CD4-positive, alpha-beta memory T cell (primary cell): ENCODE measurements at regions of chr19 and their contacts with region 1.

Region 1: DNA sequence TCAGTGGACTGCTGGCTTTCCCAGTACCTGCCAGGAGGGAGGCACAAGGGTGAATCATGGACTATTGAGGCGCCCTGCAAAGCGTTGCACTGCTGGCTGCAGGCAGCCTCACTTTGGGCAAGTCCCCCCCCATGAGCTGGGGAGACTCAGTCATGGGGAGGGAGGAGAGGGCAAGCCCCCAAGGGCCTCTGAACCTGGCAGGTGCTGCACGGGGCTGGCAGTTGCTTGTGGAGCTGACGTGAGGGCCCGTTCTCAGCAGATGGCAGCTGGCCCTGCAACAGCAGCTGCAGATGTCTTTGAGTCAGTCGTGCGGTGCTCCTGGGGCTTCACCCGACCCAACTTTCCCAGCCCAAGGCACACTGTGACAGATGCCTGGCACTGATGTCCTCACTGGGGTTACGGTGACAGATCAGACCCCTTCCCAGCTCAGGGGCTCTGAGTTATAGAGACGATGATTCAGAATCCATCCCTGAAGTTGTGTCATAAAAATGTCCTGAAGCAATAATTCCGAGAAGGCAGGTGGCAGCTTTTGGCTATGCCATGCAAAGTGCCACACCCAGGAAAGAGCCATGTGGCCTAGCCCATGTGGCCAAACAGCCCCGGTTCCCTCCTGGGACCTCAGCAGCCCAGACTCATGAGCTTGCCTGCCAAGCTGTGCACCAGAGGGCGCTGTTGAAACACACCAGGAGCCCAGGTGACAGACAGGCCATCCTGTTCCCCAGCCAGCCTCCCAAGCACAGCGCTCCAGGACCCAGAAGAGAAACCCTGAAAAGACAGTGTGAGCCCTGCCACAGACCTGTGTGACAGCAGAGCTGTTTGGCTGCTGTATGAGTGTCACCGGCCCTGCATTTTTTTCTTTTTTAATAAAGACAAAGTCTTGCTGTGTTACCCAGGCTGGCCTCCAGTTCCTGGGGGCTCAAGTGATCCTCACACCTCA is 53.6 kb upstream of the LDLR start:
- DNase-seq: peak; percentile 78 to 84 (median 81)
- H3K4me3 ChIP-seq: no peak overlapping the region
- H3K4me3 Mint-ChIP-seq: peak overlapping the region in 1 of 8 donors; percentile 18
- H3K27ac ChIP-seq: no peak overlapping the region
- H3K27ac Mint-ChIP-seq: peak overlapping the region in 5 of 7 donors; percentile 52 to 85 (median 65)
- H3K4me1 ChIP-seq: no peaks in the 10 kb centered on the region
- H3K4me1 Mint-ChIP-seq: peaks cover 4 to 21% (median 7%) of the 10 kb centered on the region in 4 donors
- H3K27me3 ChIP-seq: no peaks in the 10 kb centered on the region
- H3K27me3 Mint-ChIP-seq: no peaks in the 10 kb centered on the region

Region 2: DNA sequence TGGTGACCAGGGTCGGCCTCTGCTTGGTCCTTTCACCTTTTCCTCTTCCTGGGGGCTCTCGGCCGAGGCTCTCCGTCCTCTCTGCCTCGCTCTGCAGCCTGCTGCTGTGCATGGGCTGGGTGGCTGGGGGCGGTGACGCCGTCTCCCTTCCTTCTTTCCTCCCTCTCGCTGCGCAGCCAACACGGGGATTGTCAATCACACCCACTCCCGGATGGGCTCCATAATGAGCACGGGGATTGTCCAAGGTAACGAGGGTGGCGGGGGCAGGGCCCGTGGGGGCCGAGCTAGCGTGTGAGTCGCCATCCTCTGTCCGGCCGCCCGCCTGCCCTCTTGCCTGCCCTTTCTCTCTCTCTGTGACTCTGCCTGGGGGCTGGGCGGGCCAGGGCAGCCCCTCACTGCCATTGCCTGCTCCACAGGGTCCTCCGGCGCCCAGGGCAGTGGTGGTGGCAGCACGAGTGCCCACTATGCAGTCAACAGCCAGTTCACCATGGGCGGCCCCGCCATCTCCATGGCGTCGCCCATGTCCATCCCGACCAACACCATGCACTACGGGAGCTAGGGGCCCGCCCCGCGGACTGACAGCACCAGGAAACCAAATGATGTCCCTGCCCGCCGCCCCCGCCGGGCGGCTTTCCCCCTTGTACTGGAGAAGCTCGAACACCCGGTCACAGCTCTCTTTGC is 114.4 kb before region 1 on chr19:
- CTCF ChIA-PET with region 1: no interaction called
- POLR2A ChIA-PET with region 1: no interaction called
- intact Hi-C with region 1: no loop called
- DNase-seq: no peak
- H3K4me3 ChIP-seq: no peak overlapping the region
- H3K4me3 Mint-ChIP-seq: no peak overlapping the region
- H3K27ac ChIP-seq: no peak overlapping the region
- H3K27ac Mint-ChIP-seq: no peak overlapping the region
- H3K4me1 ChIP-seq: no peaks in the 10 kb centered on the region
- H3K4me1 Mint-ChIP-seq: peaks cover 0 to 5% (median 0%) of the 10 kb centered on the region in 4 donors
- H3K27me3 ChIP-seq: no peaks in the 10 kb centered on the region
- H3K27me3 Mint-ChIP-seq: no peaks in the 10 kb centered on the region

Region 3: DNA sequence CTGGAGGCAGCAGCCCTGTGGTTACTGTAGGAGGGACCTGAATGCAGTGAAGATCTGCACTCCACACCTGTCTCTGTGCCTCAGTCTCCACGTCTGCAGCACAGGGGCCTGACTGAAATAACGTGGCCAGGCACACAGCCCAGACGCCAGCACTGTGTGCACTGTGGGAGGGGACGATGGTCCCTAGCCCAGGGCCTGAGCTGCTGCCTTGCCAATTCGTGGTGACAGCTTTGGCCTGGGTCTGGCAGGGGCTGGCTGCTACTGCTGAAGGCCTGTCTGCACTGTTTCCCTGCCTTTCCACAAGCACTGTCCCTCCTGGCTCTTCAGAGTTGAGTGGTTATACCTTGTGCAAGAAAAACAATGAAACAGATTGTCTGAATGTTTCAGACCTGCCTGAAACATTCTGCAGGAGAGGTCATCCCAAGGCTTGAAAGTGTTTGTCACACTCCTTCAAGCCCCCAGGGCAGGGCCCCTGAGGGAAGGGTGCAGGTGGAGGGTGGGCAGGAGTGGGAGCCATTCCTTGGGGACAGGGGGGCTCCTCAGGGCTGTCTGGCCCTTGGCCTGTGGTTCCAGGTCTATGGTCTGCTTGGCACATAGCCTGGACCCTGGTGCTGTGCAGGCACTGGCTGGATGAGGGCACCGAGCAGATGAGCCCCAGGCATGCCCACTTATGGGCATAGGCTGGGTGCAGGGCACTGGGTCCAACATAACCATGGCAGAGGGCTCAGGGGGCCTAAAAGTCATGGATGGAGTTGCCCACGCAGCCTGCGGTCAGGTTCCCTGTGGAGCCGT is 14.8 kb after region 1 on chr19:
- CTCF ChIA-PET with region 1: interaction called, 21 read pairs
- POLR2A ChIA-PET with region 1: interaction called, 9 read pairs
- intact Hi-C with region 1: no loop called
- DNase-seq: no peak
- H3K4me3 ChIP-seq: no peak overlapping the region
- H3K4me3 Mint-ChIP-seq: peak overlapping the region in 2 of 8 donors; percentile 56 to 80
- H3K27ac ChIP-seq: peak overlapping the region; percentile 52
- H3K27ac Mint-ChIP-seq: peak overlapping the region; percentile 80 to 96 (median 94)
- H3K4me1 ChIP-seq: peaks cover 59% of the 10 kb centered on the region
- H3K4me1 Mint-ChIP-seq: peaks cover 22 to 60% (median 44%) of the 10 kb centered on the region in 4 donors
- H3K27me3 ChIP-seq: no peaks in the 10 kb centered on the region
- H3K27me3 Mint-ChIP-seq: no peaks in the 10 kb centered on the region

Region 4: GRCh38 chr19:11090054-11090900 is 54.6 kb after region 1 on chr19:
- CTCF ChIA-PET with region 1: interaction called, 41 read pairs
- POLR2A ChIA-PET with region 1: interaction called, 36 read pairs
- intact Hi-C with region 1: loop called (anchors 1 kb)
- DNase-seq: peak; percentile 94 to 98 (median 97)
- H3K4me3 ChIP-seq: peak overlapping the region; percentile 43 to 64
- H3K4me3 Mint-ChIP-seq: peak overlapping the region; percentile 81 to 93 (median 88)
- H3K27ac ChIP-seq: peak overlapping the region; percentile 98
- H3K27ac Mint-ChIP-seq: peak overlapping the region; percentile 93 to 100 (median 99)
- H3K4me1 ChIP-seq: peaks cover 61% of the 10 kb centered on the region
- H3K4me1 Mint-ChIP-seq: peaks cover 26 to 59% (median 43%) of the 10 kb centered on the region in 4 donors
- H3K27me3 ChIP-seq: no peaks in the 10 kb centered on the region
- H3K27me3 Mint-ChIP-seq: no peaks in the 10 kb centered on the region

Region 5: GRCh38 chr19:11111117-11111774 is 75.5 kb after region 1 on chr19:
- CTCF ChIA-PET with region 1: interaction called, 17 read pairs
- POLR2A ChIA-PET with region 1: no interaction called
- intact Hi-C with region 1: no loop called
- DNase-seq: no peak
- H3K4me3 ChIP-seq: no peak overlapping the region
- H3K4me3 Mint-ChIP-seq: no peak overlapping the region
- H3K27ac ChIP-seq: no peak overlapping the region
- H3K27ac Mint-ChIP-seq: peak overlapping the region in 1 of 7 donors; percentile 32
- H3K4me1 ChIP-seq: no peaks in the 10 kb centered on the region
- H3K4me1 Mint-ChIP-seq: no peaks in the 10 kb centered on the region
- H3K27me3 ChIP-seq: no peaks in the 10 kb centered on the region
- H3K27me3 Mint-ChIP-seq: no peaks in the 10 kb centered on the region

Region 6: DNA sequence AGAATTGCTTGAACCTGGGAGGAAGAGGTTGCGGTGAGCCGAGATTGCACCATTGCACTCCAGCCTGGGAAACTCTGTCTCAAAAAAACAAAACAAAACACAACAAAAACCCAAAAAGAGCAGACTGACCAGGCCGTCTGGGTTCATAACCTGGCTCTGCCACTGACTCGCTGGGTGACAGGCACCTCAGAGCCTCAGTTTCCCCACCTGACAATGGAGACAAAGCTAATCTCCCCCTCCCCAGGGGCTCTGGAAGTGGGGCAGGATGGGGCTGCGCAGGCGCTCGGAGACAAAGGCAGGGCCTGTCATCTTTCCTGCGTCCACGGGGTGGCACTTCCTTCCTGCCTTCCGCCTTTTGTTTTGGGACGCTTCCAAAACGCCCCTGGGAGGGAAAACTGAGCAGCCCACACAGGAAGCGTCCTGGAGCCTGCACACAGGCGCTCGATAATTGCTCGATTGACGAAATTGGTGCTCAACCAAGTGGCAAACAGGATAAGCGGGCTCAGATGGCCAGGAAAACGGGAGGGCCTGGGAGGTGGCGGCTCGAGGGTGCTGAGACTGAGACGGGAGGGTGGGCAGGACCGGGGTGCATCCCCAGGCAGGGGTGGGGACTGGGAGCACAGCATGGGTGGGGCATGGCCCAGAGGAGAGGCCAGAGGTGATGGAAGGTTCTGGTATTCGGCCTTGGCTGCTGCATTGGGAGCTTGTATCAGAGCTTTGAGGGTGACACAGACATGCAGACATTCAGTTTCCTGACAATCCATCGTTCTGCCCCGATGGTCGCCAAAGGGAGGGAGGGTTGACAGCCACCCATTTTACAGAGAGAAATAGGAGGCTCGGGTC is 102.1 kb after region 1 on chr19:
- CTCF ChIA-PET with region 1: interaction called, 11 read pairs
- POLR2A ChIA-PET with region 1: interaction called, 3 read pairs
- intact Hi-C with region 1: no loop called
- DNase-seq: peak; percentile 52 to 67 (median 54)
- H3K4me3 ChIP-seq: peak overlapping the region; percentile 52 to 60
- H3K4me3 Mint-ChIP-seq: peak overlapping the region; percentile 80 to 92 (median 87)
- H3K27ac ChIP-seq: no peak overlapping the region
- H3K27ac Mint-ChIP-seq: peak overlapping the region in 6 of 7 donors; percentile 13 to 91 (median 86)
- H3K4me1 ChIP-seq: peaks cover 15% of the 10 kb centered on the region
- H3K4me1 Mint-ChIP-seq: peaks cover 8 to 21% (median 9%) of the 10 kb centered on the region in 4 donors
- H3K27me3 ChIP-seq: no peaks in the 10 kb centered on the region
- H3K27me3 Mint-ChIP-seq: no peaks in the 10 kb centered on the region